Activated CD4-positive, alpha-beta memory T cell treated with anti-CD3 and anti-CD28 coated beads for 36 hours (primary cell): ENCODE measurements at regions of chr2 and their contacts with region 1.

Region 1: GRCh38 chr2:32168513-32168912 is 2.8 kb downstream of the SLC30A6 start:
- DNase-seq: no peak
- H3K4me3 Mint-ChIP-seq: no peak overlapping the region
- H3K27ac Mint-ChIP-seq: no peak overlapping the region
- H3K4me1 Mint-ChIP-seq: peaks cover 45% of the 10 kb centered on the region
- H3K27me3 Mint-ChIP-seq: no peaks in the 10 kb centered on the region

Region 2: GRCh38 chr2:31467418-31467817 is 701.1 kb before region 1 on chr2:
- CTCF ChIA-PET with region 1: no interaction called
- POLR2A ChIA-PET with region 1: no interaction called
- intact Hi-C with region 1: no loop called
- DNase-seq: no peak
- H3K4me3 Mint-ChIP-seq: no peak overlapping the region
- H3K27ac Mint-ChIP-seq: no peak overlapping the region
- H3K4me1 Mint-ChIP-seq: no peaks in the 10 kb centered on the region
- H3K27me3 Mint-ChIP-seq: no peaks in the 10 kb centered on the region

Region 3: GRCh38 chr2:32010670-32011484 is 157.6 kb before region 1 on chr2 and contains the start of gene MEMO1:
- CTCF ChIA-PET with region 1: no interaction called
- POLR2A ChIA-PET with region 1: interaction called, 5 read pairs
- intact Hi-C with region 1: loop called (anchors 2 kb)
- DNase-seq: peak; percentile 96
- H3K4me3 Mint-ChIP-seq: peak within 1 kb of the TSS; percentile 86
- H3K27ac Mint-ChIP-seq: peak within 1 kb of the TSS; percentile 95
- H3K4me1 Mint-ChIP-seq: peaks cover 34% of the 10 kb centered on the region
- H3K27me3 Mint-ChIP-seq: no peaks in the 10 kb centered on the region
- total RNA-seq, gene MEMO1: 44.7 to 47.6 TPM

Region 4: DNA sequence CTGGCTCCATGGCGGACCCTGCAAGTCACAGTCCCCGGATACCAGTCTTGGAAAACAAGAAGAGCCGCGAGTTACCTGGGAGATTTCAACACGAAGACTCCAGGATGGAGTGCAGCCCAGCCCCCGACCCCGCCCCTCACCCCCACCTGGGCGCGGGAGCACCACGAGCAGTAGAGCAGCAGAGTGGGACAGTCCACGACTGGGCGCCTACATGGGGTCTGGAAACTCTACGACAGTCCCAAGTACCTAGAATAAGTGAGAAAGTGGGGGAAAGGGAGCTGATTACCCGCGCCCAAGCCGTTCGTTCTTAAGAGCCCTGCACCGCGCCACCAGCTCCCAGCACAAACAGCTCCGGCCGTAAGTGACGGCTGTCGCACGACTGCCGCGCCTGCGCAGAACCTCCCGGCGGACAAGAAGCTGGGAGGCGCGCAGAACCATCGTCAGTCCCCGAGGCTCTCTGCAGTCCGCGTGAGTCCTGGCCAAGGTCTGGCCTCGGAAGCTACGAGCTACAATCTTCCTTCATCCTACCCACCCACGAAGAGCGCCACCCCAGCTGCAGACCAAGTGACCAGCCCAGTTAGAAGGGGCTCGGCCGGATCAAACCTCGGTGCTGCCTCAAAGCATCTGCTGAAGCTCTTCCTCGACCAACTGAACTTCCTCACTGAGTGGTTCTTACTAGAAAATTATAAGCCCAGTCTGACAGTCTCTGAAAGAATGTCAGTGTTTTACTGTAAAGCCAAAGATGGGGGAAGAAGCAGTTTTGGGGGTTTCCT is 128.9 kb before region 1 on chr2 and contains the start of gene DPY30:
- CTCF ChIA-PET with region 1: interaction called, 3 read pairs
- POLR2A ChIA-PET with region 1: interaction called, 9 read pairs
- intact Hi-C with region 1: loop called (anchors 1 kb)
- DNase-seq: peak; percentile 94
- H3K4me3 Mint-ChIP-seq: peak within 1 kb of the TSS; percentile 81
- H3K27ac Mint-ChIP-seq: peak within 1 kb of the TSS; percentile 88
- H3K4me1 Mint-ChIP-seq: peaks cover 12% of the 10 kb centered on the region
- H3K27me3 Mint-ChIP-seq: no peaks in the 10 kb centered on the region
- total RNA-seq, gene DPY30: 81.6 to 89.2 TPM

Region 5: GRCh38 chr2:32189011-32189410 is 20.5 kb after region 1 on chr2:
- CTCF ChIA-PET with region 1: no interaction called
- POLR2A ChIA-PET with region 1: interaction called, 6 read pairs
- intact Hi-C with region 1: loop called (anchors 2 kb)
- DNase-seq: no peak
- H3K4me3 Mint-ChIP-seq: no peak overlapping the region
- H3K27ac Mint-ChIP-seq: no peak overlapping the region
- H3K4me1 Mint-ChIP-seq: peaks cover 27% of the 10 kb centered on the region
- H3K27me3 Mint-ChIP-seq: no peaks in the 10 kb centered on the region

Region 6: GRCh38 chr2:32277674-32278482 is 109.4 kb after region 1 on chr2 and contains the start of gene YIPF4:
- CTCF ChIA-PET with region 1: no interaction called
- POLR2A ChIA-PET with region 1: interaction called, 5 read pairs
- intact Hi-C with region 1: loop called (anchors 1 kb)
- DNase-seq: peak; percentile 93
- H3K4me3 Mint-ChIP-seq: peak within 1 kb of the TSS; percentile 85
- H3K27ac Mint-ChIP-seq: peak within 1 kb of the TSS; percentile 87
- H3K4me1 Mint-ChIP-seq: peaks cover 22% of the 10 kb centered on the region
- H3K27me3 Mint-ChIP-seq: no peaks in the 10 kb centered on the region
- total RNA-seq, gene YIPF4: 43.5 to 44.3 TPM

Region 7: DNA sequence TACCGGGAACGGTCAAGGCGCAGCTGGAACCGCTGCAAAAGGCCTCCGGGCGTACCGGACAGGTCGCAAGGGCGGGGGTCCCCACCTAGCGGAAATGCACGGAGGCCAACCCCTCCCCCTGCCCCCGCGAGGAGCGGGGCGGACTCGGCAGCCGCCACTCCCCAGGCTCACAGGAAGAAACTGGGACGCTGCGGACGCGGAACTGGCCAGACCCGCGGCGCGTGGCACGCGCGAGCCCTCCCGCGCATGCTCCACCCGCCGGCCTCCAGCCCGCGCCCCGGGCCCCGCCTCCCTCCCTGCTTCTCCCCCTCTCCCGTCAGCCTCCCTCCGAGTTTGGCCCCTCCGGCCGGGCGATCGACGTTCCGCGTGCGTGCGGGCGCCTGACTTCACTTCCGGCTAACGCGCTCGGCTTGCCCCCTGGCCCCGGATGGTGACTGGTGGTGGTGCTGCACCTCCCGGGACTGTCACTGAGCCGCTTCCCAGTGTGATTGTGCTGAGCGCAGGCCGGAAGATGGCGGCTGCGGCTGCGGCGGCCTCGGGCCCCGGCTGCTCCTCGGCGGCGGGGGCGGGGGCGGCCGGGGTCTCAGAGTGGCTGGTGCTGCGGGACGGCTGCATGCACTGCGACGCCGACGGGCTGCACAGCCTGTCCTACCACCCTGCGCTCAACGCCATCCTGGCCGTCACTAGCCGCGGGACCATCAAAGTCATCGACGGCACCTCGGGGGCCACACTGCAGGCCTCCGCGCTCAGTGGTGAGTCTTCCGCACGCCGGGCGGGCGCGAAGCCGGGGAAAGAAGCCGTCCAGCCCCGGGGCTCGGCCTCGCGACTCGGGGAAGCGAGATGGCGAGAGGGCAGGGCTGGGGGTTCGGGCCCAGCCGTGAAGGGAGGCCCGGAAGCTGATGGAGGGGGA is 188.5 kb after region 1 on chr2 and contains the start of gene BIRC6:
- CTCF ChIA-PET with region 1: no interaction called
- POLR2A ChIA-PET with region 1: interaction called, 7 read pairs
- intact Hi-C with region 1: loop called (anchors 1 kb)
- DNase-seq: peak; percentile 99
- H3K4me3 Mint-ChIP-seq: peak within 1 kb of the TSS; percentile 84
- H3K27ac Mint-ChIP-seq: peak within 1 kb of the TSS; percentile 92
- H3K4me1 Mint-ChIP-seq: peaks cover 39% of the 10 kb centered on the region
- H3K27me3 Mint-ChIP-seq: no peaks in the 10 kb centered on the region
- total RNA-seq, gene BIRC6: 58.2 to 62.4 TPM